ENCODE measurements at regions of chr2 and their contacts with region 1.

Region 1: GRCh38 chr2:238684362-238685326 is 163.2 kb upstream of the TWIST2 start:
- DNase-seq: peak; percentile 99
- H3K4me3 Mint-ChIP-seq: peak overlapping the region; percentile 33
- H3K27ac Mint-ChIP-seq: peak overlapping the region; percentile 98
- H3K4me1 Mint-ChIP-seq: peaks cover 20% of the 10 kb centered on the region
- H3K27me3 Mint-ChIP-seq: no peaks in the 10 kb centered on the region
- CTCF ChIP-seq: no peak

Region 2: GRCh38 chr2:238370823-238371372 is 313.7 kb before region 1 on chr2:
- CTCF ChIA-PET with region 1: no interaction called
- POLR2A ChIA-PET with region 1: interaction called, 3 read pairs
- intact Hi-C with region 1: loop called (anchors 1 kb)
- DNase-seq: peak; percentile 71
- H3K4me3 Mint-ChIP-seq: no peak overlapping the region
- H3K27ac Mint-ChIP-seq: no peak overlapping the region
- H3K4me1 Mint-ChIP-seq: peaks cover 6% of the 10 kb centered on the region
- H3K27me3 Mint-ChIP-seq: no peaks in the 10 kb centered on the region
- CTCF ChIP-seq: peak; percentile 75

Region 3: GRCh38 chr2:238513346-238513745 is 171.3 kb before region 1 on chr2:
- CTCF ChIA-PET with region 1: interaction called, 6 read pairs
- POLR2A ChIA-PET with region 1: no interaction called
- intact Hi-C with region 1: loop called (anchors 2 kb)
- DNase-seq: peak; percentile 79
- H3K4me3 Mint-ChIP-seq: no peak overlapping the region
- H3K27ac Mint-ChIP-seq: no peak overlapping the region
- H3K4me1 Mint-ChIP-seq: no peaks in the 10 kb centered on the region
- H3K27me3 Mint-ChIP-seq: no peaks in the 10 kb centered on the region
- CTCF ChIP-seq: peak; percentile 68

Region 4: GRCh38 chr2:238596571-238597551 is 87.8 kb before region 1 on chr2:
- CTCF ChIA-PET with region 1: no interaction called
- POLR2A ChIA-PET with region 1: interaction called, 14 read pairs
- intact Hi-C with region 1: no loop called
- DNase-seq: peak; percentile 97
- H3K4me3 Mint-ChIP-seq: peak overlapping the region; percentile 33
- H3K27ac Mint-ChIP-seq: peak overlapping the region; percentile 68
- H3K4me1 Mint-ChIP-seq: peaks cover 25% of the 10 kb centered on the region
- H3K27me3 Mint-ChIP-seq: no peaks in the 10 kb centered on the region
- CTCF ChIP-seq: no peak

Region 5: DNA sequence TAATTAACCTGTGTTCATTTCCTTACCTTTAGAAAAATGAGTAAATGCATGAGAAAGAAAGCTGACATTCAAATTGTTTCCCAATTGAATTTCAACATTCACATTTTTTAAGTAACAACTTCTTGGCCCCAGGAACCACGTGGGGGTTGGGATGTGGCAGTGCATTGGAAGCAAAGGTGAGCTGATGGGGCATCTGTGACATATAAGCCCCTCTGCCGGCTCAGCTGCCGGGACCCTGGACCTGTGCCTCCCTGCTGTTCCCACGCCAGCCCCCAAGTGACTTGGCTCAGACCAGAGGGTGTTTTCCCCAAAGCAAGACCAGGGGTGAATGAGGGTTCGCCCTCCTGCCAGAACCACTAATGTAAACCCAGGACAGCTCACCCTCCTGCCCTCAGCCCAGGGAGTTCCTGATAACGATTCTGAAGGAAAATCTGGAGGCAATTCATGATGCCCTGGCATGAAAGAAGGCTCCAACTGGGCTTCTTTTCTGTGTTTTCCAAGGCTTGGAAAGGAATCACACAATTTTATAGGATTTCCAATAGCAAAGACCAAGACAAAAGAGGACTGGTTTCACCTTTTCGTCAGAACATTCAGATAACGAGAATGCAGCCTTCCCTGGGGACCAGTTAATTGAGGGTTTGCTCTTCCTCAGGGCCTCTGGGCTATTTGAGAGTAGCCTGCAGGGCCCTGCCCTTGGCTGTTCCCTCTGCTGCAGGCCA is 30.0 kb before region 1 on chr2:
- CTCF ChIA-PET with region 1: no interaction called
- POLR2A ChIA-PET with region 1: no interaction called
- intact Hi-C with region 1: no loop called
- DNase-seq: no peak
- H3K4me3 Mint-ChIP-seq: no peak overlapping the region
- H3K27ac Mint-ChIP-seq: no peak overlapping the region
- H3K4me1 Mint-ChIP-seq: no peaks in the 10 kb centered on the region
- H3K27me3 Mint-ChIP-seq: no peaks in the 10 kb centered on the region
- CTCF ChIP-seq: no peak

Region 6: DNA sequence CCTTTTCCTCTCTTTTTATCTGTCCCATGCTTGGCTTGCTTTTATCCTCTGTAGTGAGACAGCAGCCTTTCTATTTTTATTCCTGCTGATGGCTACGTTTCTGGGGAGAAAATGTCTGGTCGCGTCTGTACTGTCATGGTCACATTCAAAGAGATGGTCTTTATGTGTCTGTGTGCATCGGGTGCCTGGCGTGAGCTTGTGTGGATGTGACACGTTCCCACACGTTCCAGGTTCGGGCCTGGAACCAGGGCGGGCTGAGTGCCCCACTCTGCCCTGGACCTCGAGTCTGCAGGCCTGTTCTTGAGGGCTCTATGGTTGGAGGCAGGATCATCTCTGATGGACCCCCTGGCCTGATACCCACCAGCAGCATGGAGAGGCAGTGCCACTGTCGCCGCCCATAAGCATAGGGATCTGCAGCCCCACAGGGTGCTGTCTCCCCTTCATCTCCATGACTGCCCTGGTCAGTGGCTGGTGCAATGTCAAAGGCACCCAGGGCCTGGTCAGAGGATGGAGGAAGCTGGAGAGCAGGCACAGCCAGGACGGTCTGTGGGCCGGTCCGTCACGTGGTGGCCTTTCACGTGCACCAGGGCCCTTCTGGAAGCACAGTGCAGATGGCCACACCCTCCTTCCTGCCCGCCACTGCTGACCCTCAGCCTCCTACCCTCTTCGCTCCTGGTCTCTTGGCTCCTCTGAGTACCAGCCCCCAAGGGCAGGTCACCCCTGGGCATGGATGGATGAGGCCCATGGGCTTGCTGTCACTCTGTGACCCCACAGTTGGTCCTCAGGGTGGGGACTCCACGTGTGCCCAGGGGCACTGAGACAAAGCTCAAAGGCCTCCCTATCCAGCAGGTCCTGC is 14.0 kb after region 1 on chr2:
- CTCF ChIA-PET with region 1: no interaction called
- POLR2A ChIA-PET with region 1: interaction called, 10 read pairs
- intact Hi-C with region 1: no loop called
- DNase-seq: no peak
- H3K4me3 Mint-ChIP-seq: no peak overlapping the region
- H3K27ac Mint-ChIP-seq: no peak overlapping the region
- H3K4me1 Mint-ChIP-seq: no peaks in the 10 kb centered on the region
- H3K27me3 Mint-ChIP-seq: peaks cover 10% of the 10 kb centered on the region
- CTCF ChIP-seq: no peak

Region 7: GRCh38 chr2:238777369-238778067 is 92.9 kb after region 1 on chr2:
- CTCF ChIA-PET with region 1: no interaction called
- POLR2A ChIA-PET with region 1: no interaction called
- intact Hi-C with region 1: no loop called
- DNase-seq: no peak
- H3K4me3 Mint-ChIP-seq: no peak overlapping the region
- H3K27ac Mint-ChIP-seq: no peak overlapping the region
- H3K4me1 Mint-ChIP-seq: no peaks in the 10 kb centered on the region
- H3K27me3 Mint-ChIP-seq: peaks cover 2% of the 10 kb centered on the region
- CTCF ChIP-seq: no peak

Measured in MCF 10A (cell line).